ENCODE measurements at regions of chr4 and their contacts with region 1.

Region 1: DNA sequence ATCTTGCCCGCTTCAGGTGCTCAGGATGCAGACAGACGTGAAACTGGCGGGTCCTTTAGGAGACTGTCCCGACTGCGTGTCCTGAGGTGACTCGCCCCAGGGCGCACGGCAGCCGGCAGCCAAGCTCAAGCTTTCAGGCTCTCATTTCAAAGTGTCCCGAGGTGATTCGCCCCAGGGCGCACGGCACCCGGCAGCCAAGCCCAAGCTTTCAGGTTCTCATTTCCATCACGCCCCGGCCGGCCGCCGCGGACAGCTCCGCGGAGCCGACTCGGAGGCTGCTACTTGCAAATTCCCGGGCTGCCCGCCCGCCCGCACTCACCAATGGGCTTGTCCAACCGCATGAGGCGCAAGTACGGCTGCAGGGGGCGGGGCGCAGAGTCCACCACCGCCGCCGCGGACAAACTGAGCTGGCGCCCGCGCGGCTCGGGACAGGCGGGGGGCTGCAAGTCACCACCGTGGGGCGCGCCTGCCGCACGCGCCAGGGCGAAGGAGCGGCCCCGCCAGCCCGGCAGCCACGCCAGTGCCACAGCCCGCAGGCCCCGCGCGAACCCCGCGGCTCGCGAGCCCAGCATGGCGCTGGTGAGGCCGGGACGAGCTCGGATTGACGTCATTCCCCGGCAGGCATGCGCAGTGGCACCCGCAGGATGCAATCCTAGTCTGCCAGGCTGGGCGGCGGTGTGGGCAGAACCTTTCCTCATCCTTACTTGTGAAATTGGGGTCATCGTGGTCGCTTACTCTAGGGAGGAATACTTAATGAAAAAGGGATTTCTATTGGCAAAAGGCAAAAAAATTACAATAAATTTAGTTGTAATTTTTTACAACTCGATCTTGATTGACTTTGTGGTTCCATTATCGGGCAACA is at the start of gene COQ2:
- DNase-seq: peak; percentile 91 to 99 (median 97)

Region 2: DNA sequence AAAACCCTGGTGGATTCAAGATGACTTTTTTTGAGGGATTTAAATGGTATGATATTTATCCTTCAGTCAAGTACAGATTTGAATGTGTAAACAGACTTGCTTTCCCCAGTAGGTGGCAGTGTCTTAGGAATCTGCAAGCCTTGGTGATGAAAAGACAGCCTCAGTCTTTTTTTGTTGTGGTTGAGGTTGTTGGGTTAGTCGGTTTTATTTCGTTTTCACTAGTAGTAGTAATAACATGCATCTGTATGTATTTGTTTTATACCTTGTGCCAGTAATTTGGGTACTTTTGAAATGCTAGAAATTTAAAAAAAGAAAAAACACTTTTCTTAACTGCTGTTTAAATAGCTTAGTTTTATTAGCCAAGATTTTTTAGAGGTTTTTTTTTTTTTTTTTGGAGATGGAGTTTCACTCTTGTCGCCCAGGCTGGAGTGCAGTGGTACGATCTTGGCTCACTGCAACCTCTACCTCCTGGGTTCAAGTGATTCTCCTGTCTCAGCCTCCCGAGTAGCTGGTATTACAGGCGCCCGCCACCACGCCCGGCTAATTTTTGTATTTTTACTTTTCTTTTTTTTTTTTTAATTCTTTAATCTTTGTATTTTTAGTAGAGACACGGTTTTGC is 210.2 kb before region 1 on chr4:
- intact Hi-C with region 1: loop called (anchors 10 kb)
- DNase-seq: peak in 17 of 42 donors; percentile 11 to 69 (median 42)

Region 3: DNA sequence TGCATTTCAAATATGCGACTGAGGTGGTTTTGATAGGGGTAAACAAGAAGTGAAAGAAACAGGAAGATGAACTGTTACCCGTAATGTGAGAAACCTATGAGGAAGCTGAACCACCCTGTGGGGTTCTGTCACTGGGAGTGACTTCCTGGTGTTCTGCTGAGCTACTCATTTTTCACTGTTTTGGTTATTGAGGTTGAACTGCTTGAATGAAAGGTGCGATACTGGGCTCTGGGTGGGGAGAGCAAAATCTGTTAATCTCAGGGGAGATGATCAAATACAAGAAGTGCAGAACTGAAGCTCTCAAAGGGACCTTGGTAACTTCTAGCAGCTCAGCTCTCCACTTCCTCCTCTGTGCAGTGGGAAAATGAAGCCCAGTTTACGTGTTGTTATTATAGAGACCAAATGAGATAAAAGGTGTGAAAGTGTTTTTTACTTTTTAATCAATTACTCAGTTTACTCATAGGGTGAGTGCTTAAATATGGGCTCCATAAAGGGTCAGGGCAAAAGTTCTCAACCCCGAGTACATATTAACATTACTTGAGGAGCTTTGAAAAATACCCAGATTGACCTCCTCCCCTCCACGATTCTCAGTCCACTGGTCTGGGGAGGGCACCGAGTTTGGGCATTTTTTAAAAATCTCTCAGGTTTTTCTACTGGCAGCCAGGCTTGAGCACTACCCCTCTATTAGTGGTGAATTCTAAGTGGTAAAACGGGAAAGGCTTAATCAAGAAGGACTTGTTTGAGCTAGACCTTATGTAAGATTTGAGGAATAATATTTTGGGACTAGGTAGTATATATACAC is 66.5 kb before region 1 on chr4:
- intact Hi-C with region 1: no loop called
- DNase-seq: peak in 4 of 42 donors; percentile 6 to 21 (median 13)

Measured in head of caudate nucleus (tissue), 42 donors.